Panc1 (cell line): ENCODE measurements at regions of chr11 and their contacts with region 1.

Region 1: GRCh38 chr11:77981346-77981947 is 13.0 kb downstream of the INTS4 start:
- DNase-seq: no peak
- ATAC-seq: no peak
- H3K4me3 ChIP-seq: no peak overlapping the region
- H3K27ac ChIP-seq: no peak overlapping the region
- H3K4me1 ChIP-seq: no peaks in the 10 kb centered on the region
- H3K27me3 ChIP-seq: no peaks in the 10 kb centered on the region
- CTCF ChIP-seq: no peak

Region 2: DNA sequence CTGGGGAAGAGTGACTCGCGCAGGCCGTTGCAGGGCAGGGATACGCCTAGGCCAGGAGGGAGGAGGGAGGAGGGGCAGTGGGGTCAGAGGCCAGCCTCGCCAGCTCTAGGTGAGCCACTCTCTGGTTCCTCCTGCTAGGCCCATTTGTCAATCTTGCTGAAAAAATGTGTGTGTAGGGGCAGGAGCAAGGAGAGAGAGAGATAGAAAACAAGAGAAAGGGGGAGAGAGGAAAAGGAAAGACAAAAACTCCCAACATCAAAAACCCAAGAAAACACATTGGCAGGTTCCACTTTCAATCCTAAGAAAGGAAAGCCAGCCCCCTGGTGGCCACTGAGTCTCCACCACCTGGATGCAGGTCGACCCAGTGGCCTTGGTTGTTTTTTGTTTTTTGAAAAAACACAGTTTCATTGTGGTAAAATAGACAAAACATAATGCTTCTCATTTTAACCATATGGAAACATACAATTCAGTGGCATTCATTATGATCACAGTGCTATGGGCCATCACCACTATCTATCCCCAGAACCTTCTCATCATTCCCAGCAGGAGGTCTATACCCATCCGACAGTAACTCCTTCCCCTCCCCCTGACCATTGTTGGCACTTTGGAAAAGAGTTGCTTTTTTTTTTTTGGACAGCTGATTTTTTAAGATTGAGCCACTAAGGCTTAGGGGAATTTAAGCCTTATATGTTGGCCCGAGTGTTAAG is 867.9 kb before region 1 on chr11:
- CTCF ChIA-PET with region 1: interaction called, 10 read pairs
- POLR2A ChIA-PET with region 1: no interaction called
- in situ Hi-C with region 1: no loop called
- intact Hi-C with region 1: no loop called
- DNase-seq: no peak
- ATAC-seq: peak; percentile 47; the same call in 1 of the 2 replicates
- H3K4me3 ChIP-seq: no peak overlapping the region
- H3K27ac ChIP-seq: no peak overlapping the region
- H3K4me1 ChIP-seq: peaks cover 8% of the 10 kb centered on the region
- H3K27me3 ChIP-seq: no peaks in the 10 kb centered on the region
- CTCF ChIP-seq: peak; percentile 86

Region 3: DNA sequence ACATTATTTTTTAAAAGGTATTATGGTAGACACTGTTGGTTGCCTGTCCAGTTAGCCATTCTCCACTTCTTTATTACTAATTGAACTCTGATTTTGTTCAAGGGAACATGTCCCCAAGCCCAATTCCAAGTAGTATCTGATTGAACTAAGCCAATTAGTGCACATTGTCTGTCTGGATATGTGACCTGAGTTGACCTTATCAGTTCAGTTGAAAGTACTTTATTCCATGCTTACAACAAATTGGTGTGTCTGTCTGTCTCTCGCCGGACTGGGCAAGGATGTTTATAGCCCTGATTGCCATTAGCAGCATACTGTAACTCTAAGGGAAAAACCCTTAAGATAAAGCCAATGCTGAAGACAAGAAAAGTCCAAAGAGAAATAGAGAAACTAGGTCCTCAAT is 72.6 kb before region 1 on chr11:
- CTCF ChIA-PET with region 1: no interaction called
- POLR2A ChIA-PET with region 1: interaction called, 12 read pairs
- in situ Hi-C with region 1: no loop called
- intact Hi-C with region 1: no loop called
- DNase-seq: no peak
- ATAC-seq: no peak
- H3K4me3 ChIP-seq: no peak overlapping the region
- H3K27ac ChIP-seq: no peak overlapping the region
- H3K4me1 ChIP-seq: peaks cover under 1% of the 10 kb centered on the region; the same call in 1 of the 2 replicates
- H3K27me3 ChIP-seq: no peaks in the 10 kb centered on the region
- CTCF ChIP-seq: no peak

Region 4: GRCh38 chr11:77994412-77995362 is 13.2 kb after region 1 on chr11 and contains the start of gene INTS4:
- CTCF ChIA-PET with region 1: no interaction called
- POLR2A ChIA-PET with region 1: interaction called, 22 read pairs
- in situ Hi-C with region 1: no loop called
- intact Hi-C with region 1: no loop called
- DNase-seq: peak; percentile 99
- ATAC-seq: peak; percentile 99
- H3K4me3 ChIP-seq: peak within 1 kb of the TSS; percentile 73 to 87
- H3K27ac ChIP-seq: peak within 1 kb of the TSS; percentile 99
- H3K4me1 ChIP-seq: peaks cover 13% of the 10 kb centered on the region; the same call in 1 of the 2 replicates
- H3K27me3 ChIP-seq: no peaks in the 10 kb centered on the region
- CTCF ChIP-seq: no peak
- total RNA-seq, gene INTS4: 48.2 TPM

Region 5: GRCh38 chr11:78228467-78228866 is 247.0 kb after region 1 on chr11:
- CTCF ChIA-PET with region 1: no interaction called
- POLR2A ChIA-PET with region 1: no interaction called
- in situ Hi-C with region 1: no loop called
- intact Hi-C with region 1: no loop called
- DNase-seq: peak; percentile 48
- ATAC-seq: peak; percentile 90
- H3K4me3 ChIP-seq: no peak overlapping the region
- H3K27ac ChIP-seq: no peak overlapping the region
- H3K4me1 ChIP-seq: no peaks in the 10 kb centered on the region
- H3K27me3 ChIP-seq: no peaks in the 10 kb centered on the region
- CTCF ChIP-seq: peak; percentile 85

Region 6: DNA sequence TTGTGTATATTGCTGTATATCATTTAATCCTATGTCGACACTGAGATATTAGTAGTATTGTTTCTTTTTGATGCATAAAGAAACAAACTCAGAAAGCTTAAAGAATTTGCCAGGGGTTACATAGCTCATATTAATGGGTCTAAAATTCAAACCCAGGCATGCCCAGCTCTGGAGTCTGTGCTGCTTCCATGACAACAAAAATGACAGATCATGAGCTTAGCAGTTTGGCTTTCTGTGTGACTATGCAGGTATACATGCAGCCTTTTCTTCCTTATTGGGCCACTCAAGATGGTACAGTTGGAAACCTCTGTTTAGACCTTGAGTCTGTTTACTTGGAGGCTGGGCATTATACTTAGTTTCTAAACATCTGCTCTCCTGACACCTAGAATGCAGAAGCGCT is 1679.9 kb after region 1 on chr11:
- CTCF ChIA-PET with region 1: no interaction called
- POLR2A ChIA-PET with region 1: no interaction called
- in situ Hi-C with region 1: no loop called
- intact Hi-C with region 1: no loop called
- DNase-seq: no peak
- ATAC-seq: no peak
- H3K4me3 ChIP-seq: no peak overlapping the region
- H3K27ac ChIP-seq: no peak overlapping the region
- H3K4me1 ChIP-seq: no peaks in the 10 kb centered on the region
- H3K27me3 ChIP-seq: no peaks in the 10 kb centered on the region
- CTCF ChIP-seq: no peak